AG04449 (cell line): ENCODE measurements at regions of chr5 and their contacts with region 1.

Region 1: GRCh38 chr5:73215891-73216610 is 43.1 kb downstream of the TMEM174 start:
- DNase-seq: no peak
- H3K4me3 ChIP-seq: peak overlapping the region; percentile 59
- CTCF ChIP-seq: peak; percentile 92

Region 2: DNA sequence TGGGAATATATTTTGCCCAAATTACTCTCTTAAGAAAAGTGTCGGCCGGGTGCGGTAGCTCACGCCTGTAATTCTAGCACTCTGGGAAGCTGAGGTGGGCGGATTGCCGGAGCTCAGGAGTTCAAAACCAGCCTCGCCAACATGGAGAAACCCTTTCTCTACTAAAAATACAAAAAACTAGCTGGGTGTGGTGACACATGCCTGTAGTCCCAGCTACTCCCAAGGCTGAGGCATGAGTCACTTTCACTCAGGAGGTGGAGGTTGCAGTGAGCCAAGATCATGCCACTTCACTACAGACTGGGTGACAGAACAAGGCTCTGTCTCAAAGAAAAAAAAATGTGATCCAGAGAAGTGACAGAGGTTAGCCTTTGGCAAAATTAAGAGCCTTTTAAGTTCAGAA is 122.1 kb before region 1 on chr5:
- CTCF ChIA-PET with region 1: interaction called, 25 read pairs
- POLR2A ChIA-PET with region 1: interaction called, 3 read pairs
- DNase-seq: no peak
- H3K4me3 ChIP-seq: no peak overlapping the region
- CTCF ChIP-seq: no peak

Region 3: DNA sequence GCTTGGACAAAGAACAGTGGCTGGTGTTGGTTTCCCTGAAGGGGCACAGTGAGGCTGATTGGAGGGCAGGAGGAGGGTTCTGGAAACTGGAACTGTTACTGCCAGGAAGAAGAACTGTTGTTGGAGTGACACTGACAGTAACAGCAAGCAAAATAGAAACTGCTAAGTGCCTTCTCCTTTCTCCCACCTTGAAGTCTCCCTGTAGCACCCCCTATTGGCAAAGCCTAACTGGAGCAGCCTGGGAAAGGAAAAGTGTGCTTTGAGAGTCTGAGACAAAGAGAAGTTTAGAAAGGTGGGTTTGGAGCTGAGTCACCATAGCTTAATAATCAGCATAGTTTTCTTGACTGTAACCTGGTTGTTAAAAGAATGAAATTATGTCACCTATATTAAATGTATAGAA is 45.5 kb before region 1 on chr5:
- CTCF ChIA-PET with region 1: interaction called, 11 read pairs
- POLR2A ChIA-PET with region 1: no interaction called
- DNase-seq: no peak
- H3K4me3 ChIP-seq: no peak overlapping the region
- CTCF ChIP-seq: peak; percentile 32

Region 4: DNA sequence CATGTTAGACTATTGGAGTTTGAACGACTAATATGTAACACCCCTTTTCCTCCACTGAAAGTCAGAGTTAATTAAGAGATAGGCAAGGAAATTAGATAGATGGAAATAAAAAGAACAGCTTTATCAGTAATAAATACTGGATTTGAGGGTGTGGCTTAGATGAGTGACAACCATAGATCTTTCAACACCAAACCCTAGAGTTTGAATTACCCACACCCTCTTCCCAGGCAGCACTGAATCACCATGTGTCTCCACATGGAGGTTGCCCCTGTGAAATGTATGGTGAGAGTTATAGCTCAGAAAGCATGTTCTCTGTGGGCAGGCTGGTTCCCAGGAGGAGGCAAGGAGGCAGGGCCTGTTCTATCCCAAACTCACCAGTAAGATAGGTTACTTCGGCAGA is 26.7 kb after region 1 on chr5:
- CTCF ChIA-PET with region 1: interaction called, 17 read pairs
- POLR2A ChIA-PET with region 1: no interaction called
- DNase-seq: no peak
- H3K4me3 ChIP-seq: no peak overlapping the region
- CTCF ChIP-seq: no peak

Region 5: GRCh38 chr5:73312146-73312871 is 96.3 kb after region 1 on chr5:
- CTCF ChIA-PET with region 1: interaction called, 69 read pairs
- POLR2A ChIA-PET with region 1: no interaction called
- DNase-seq: peak; percentile 97
- H3K4me3 ChIP-seq: no peak overlapping the region
- CTCF ChIP-seq: peak; percentile 77

Region 6: DNA sequence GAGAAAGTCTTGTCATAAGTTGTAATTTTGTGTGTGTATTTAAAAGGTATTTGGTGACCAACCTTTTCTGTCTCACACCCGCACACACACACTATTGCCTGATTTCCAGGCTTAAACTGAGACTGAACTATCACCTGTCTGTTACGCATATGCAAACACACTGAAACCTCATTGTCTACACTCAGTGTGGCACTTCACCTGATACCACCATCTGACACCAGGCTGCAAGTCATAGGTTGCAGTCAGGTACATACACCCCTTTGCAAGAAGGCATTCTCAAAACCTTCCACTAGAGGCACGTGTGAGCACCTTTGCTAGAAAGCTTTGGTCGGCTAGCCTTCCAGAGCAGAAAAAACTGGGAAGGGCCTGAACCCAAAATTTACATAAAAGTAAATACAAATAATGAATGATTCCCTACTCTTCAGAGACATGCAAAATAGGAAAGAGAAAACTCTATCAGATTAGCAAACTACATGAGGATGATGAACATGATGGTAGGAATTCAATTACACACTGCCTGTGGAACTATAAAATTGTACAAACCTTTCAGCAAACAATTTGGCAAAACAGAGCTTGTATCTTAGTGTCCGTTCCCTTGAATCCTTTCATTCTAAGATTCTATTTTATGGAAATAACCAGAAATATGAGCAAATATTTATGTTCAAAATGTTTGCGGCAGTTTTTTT is 238.4 kb after region 1 on chr5:
- CTCF ChIA-PET with region 1: interaction called, 69 read pairs
- POLR2A ChIA-PET with region 1: interaction called, 5 read pairs
- DNase-seq: no peak
- H3K4me3 ChIP-seq: no peak overlapping the region
- CTCF ChIP-seq: peak; percentile 77